Common myeloid progenitor, CD34-positive (primary cell): ENCODE measurements at regions of chr2 and their contacts with region 1.

Region 1: GRCh38 chr2:171703574-171704347 is 16.5 kb downstream of the DYNC1I2 start:
- DNase-seq: peak; percentile 40 to 61 (median 57)
- H3K4me3 ChIP-seq: no peak overlapping the region
- H3K27ac ChIP-seq: no peak overlapping the region
- H3K4me1 ChIP-seq: no peaks in the 10 kb centered on the region
- H3K27me3 ChIP-seq: no peaks in the 10 kb centered on the region

Region 2: GRCh38 chr2:171687287-171688128 is 16.3 kb before region 1 on chr2 and contains the start of gene DYNC1I2:
- CTCF ChIA-PET with region 1: interaction called, 11 read pairs
- POLR2A ChIA-PET with region 1: no interaction called
- DNase-seq: peak; percentile 92 to 93 (median 92)
- H3K4me3 ChIP-seq: peak within 1 kb of the TSS; percentile 85 to 100 (median 96)
- H3K27ac ChIP-seq: peak within 1 kb of the TSS; percentile 81 to 91
- H3K4me1 ChIP-seq: peaks cover 9 to 17% (median 11%) of the 10 kb centered on the region in 4 experiments
- H3K27me3 ChIP-seq: peaks cover 0 to 3% (median 0%) of the 10 kb centered on the region in 5 experiments

Region 3: DNA sequence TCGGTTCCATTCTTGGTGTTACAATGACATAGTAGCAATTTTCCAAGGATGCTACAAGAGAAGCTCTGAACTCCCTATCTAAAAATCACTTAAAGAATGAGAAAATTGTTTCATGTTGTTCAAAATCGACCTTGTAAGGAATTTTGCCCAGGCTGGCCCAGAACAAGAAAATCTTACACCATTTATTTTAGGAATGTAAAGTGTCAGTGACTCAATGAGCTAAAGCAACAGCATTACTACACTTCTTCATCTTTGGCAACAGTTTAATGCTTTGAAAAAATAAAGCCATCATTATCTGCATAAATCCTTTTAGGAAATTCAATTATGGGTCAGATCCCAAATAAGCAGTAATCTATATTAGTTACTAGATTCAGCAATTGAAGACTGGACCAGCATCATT is 151.6 kb after region 1 on chr2:
- CTCF ChIA-PET with region 1: no interaction called
- POLR2A ChIA-PET with region 1: no interaction called
- DNase-seq: no peak
- H3K4me3 ChIP-seq: no peak overlapping the region
- H3K27ac ChIP-seq: no peak overlapping the region
- H3K4me1 ChIP-seq: no peaks in the 10 kb centered on the region
- H3K27me3 ChIP-seq: no peaks in the 10 kb centered on the region

Region 4: DNA sequence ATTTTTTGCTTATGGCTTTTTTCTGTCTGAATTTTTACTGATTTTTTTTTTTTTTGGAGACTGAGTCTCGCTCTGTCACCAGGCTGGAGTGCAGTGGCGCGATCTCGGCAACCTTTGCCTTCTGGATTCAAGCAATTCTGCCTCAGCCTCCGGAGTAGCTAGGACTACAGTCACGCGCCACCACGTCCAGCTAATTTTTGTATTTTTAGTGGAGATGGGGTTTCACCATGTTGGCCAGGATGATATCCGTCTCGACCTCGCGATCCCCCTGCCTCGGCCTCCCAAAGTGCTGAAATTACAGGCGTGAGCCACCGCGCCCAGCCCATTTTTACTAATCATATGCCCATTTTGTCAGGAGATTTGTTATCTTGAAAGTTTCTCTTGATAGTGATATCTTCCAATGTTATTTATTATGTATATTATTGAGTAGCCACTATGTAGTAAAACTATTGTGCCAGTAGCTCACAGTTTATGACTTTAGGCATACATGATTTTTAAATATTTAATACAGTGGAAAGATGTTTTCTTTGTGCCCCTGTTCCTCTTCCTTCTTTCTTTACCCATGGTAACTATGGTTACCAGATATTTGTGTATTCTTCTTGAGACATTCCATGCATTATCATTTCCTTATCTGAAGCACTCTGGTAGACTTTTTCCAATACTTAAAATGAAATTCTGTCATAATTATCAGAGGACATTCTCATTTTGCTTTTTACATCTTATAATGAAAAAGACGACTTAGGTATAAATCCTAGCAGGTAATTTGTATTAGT is 220.6 kb after region 1 on chr2:
- CTCF ChIA-PET with region 1: no interaction called
- POLR2A ChIA-PET with region 1: no interaction called
- DNase-seq: peak; percentile 19 to 40 (median 34)
- H3K4me3 ChIP-seq: peak overlapping the region in 3 of 7 experiments; percentile 39 to 99 (median 95)
- H3K27ac ChIP-seq: peak overlapping the region; percentile 65 to 96
- H3K4me1 ChIP-seq: peaks cover 11 to 30% (median 22%) of the 10 kb centered on the region in 4 experiments
- H3K27me3 ChIP-seq: no peaks in the 10 kb centered on the region

Region 5: GRCh38 chr2:172102391-172103278 is 398.9 kb after region 1 on chr2 and contains the start of gene DLX2:
- CTCF ChIA-PET with region 1: interaction called, 60 read pairs
- POLR2A ChIA-PET with region 1: no interaction called
- DNase-seq: peak; percentile 82 to 86 (median 83)
- H3K4me3 ChIP-seq: peak within 1 kb of the TSS in 6 of 7 experiments; percentile 29 to 74 (median 64)
- H3K27ac ChIP-seq: no peak within 1 kb of the TSS
- H3K4me1 ChIP-seq: peaks cover 8 to 63% (median 62%) of the 10 kb centered on the region in 4 experiments
- H3K27me3 ChIP-seq: peaks cover 18 to 100% (median 62%) of the 10 kb centered on the region in 5 experiments

Region 6: DNA sequence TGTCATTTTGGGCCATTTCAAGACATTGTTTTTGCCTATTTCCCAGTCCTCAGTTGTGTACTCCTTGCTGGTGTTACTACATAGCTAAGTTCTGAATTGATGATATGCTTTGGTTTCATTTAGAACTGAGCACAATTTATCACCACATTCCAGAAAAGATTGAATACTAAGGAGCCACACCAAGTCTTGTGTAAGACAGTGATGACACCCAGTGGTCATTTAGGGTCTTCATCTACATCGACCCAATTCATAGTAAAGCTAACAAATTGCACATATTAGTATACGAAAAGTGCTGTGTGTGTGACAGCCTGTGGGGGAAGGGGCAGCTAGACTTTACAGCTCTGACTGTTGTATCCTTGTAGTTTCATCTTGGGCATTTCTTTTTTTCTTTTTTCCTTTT is 409.9 kb after region 1 on chr2:
- CTCF ChIA-PET with region 1: interaction called, 60 read pairs
- POLR2A ChIA-PET with region 1: no interaction called
- DNase-seq: peak in 1 of 3 donors; percentile 57
- H3K4me3 ChIP-seq: no peak overlapping the region
- H3K27ac ChIP-seq: no peak overlapping the region
- H3K4me1 ChIP-seq: peaks cover 0 to 12% (median 5%) of the 10 kb centered on the region in 4 experiments
- H3K27me3 ChIP-seq: peaks cover 0 to 32% (median 10%) of the 10 kb centered on the region in 5 experiments